CD4-positive, alpha-beta memory T cell (primary cell): ENCODE measurements at regions of chr2 and their contacts with region 1.

Region 1: GRCh38 chr2:219245148-219245898 is at the starts of genes GLB1L and STK16:
- DNase-seq: peak; percentile 85 to 88 (median 86)
- H3K4me3 ChIP-seq: peak within 1 kb of the TSS; percentile 45 to 97
- H3K4me3 Mint-ChIP-seq: peak within 1 kb of the TSS; percentile 85 to 99 (median 94)
- H3K27ac ChIP-seq: peak within 1 kb of the TSS; percentile 94
- H3K27ac Mint-ChIP-seq: peak within 1 kb of the TSS; percentile 96 to 99 (median 99)
- H3K4me1 ChIP-seq: peaks cover 59% of the 10 kb centered on the region
- H3K4me1 Mint-ChIP-seq: peaks cover 39 to 80% (median 56%) of the 10 kb centered on the region in 4 donors
- H3K27me3 ChIP-seq: no peaks in the 10 kb centered on the region
- H3K27me3 Mint-ChIP-seq: no peaks in the 10 kb centered on the region
- total RNA-seq, gene GLB1L: 1.5 to 2.5 TPM
- total RNA-seq, gene STK16: 19.3 to 21.1 TPM

Region 2: GRCh38 chr2:219171231-219171651 is 74.1 kb before region 1 on chr2:
- CTCF ChIA-PET with region 1: interaction called, 18 read pairs
- POLR2A ChIA-PET with region 1: interaction called, 119 read pairs
- intact Hi-C with region 1: no loop called
- DNase-seq: peak; percentile 39 to 58 (median 49)
- H3K4me3 ChIP-seq: no peak overlapping the region
- H3K4me3 Mint-ChIP-seq: peak overlapping the region in 1 of 8 donors; percentile 25
- H3K27ac ChIP-seq: no peak overlapping the region
- H3K27ac Mint-ChIP-seq: peak overlapping the region; percentile 35 to 91 (median 75)
- H3K4me1 ChIP-seq: peaks cover 31% of the 10 kb centered on the region
- H3K4me1 Mint-ChIP-seq: peaks cover 15 to 46% (median 31%) of the 10 kb centered on the region in 4 donors
- H3K27me3 ChIP-seq: no peaks in the 10 kb centered on the region
- H3K27me3 Mint-ChIP-seq: no peaks in the 10 kb centered on the region

Region 3: DNA sequence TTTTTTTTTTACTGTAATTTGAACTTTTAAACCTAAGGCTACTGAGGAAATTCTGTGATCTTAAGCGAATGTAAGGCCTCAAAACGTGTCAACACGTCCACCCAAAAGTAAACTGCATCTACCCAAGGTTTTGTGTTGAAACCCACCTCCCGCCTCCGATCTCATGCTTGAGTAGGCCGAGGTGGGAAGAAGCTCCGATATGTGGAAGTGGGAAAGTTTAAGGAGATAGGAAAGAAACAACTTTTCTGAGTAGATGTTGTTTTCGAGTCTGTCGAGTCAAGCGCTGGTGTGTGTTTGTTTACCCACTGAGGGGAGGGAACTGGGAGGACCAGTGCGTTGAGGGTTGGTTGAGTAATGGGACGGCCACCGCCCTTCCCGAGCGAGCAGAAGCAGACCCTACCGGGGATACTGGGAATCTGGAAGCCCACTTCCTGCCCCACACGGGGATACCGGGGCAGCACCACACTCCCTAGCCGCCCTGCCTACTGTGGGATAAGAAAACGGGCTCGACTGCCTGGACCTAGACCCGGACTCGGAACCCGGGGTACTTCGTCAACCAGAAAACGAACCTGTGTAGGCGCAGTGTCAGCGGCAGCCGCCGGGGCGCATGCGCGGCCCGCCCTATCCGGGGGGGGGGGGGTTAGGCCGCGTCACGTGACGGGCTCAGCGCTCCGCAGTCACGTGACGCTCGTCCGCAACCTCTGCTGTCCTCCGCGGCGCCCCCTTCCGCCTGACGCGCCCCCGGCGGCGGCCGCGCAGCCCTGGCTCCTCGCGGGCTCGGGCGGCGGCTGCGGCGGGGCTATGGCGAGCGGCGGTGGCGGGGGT is 67.6 kb before region 1 on chr2 and contains the start of gene RETREG2:
- CTCF ChIA-PET with region 1: interaction called, 18 read pairs
- POLR2A ChIA-PET with region 1: interaction called, 119 read pairs
- intact Hi-C with region 1: loop called (anchors 1 kb)
- DNase-seq: peak; percentile 88 to 91 (median 88)
- H3K4me3 ChIP-seq: peak within 1 kb of the TSS; percentile 81 to 96
- H3K4me3 Mint-ChIP-seq: peak within 1 kb of the TSS; percentile 91 to 98 (median 95)
- H3K27ac ChIP-seq: peak within 1 kb of the TSS; percentile 91
- H3K27ac Mint-ChIP-seq: peak within 1 kb of the TSS; percentile 96 to 99 (median 98)
- H3K4me1 ChIP-seq: peaks cover 66% of the 10 kb centered on the region
- H3K4me1 Mint-ChIP-seq: peaks cover 34 to 79% (median 62%) of the 10 kb centered on the region in 4 donors
- H3K27me3 ChIP-seq: no peaks in the 10 kb centered on the region
- H3K27me3 Mint-ChIP-seq: no peaks in the 10 kb centered on the region
- total RNA-seq, gene RETREG2: 123 to 128 TPM

Region 4: DNA sequence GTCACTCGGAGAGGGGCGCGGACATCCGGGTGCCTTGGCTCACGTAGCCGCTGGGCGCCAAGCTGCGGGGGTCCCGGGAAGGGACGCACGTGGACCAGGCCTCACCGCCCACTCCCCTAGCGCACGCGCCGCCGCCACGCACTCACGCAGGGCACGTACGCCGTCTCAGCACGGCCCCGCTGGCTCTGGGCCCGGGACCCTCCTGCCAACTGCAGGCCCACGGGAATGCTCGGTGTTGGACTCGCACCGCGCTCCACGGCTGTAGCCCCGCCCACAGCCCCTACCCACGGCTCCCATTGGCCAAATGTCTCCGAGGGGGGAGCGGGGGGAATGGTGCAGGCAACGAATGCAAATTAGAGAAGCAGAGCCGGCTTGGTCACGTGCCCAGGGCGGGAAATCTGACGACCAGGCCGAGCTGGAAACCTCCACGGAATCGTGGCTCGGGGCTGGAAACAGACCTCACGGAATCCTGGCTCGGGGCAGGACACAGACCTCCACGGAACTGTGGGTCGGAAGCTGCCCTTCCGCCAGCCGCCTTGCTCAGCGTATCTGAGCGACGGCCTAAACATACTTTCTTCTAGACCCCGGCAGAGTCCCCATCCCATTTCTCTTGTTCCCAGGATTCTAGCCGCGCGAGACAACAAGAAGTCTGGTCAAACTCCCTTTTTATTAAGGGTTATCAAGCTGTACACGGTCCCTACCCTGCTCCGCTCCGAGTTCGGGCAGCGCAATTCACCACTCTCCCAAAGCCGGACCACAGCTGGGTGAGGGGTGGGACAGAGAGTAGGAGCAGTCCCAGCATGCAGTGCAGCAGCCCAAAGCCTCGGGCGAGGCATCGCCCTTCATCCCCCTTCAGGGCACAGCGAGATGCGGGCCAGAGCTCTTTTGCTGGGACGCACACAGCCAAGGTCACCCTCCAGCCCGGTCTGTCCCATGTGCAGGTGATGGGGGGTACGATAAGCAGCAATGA is 26.3 kb before region 1 on chr2 and contains the start of gene ABCB6:
- CTCF ChIA-PET with region 1: interaction called, 11 read pairs
- POLR2A ChIA-PET with region 1: interaction called, 684 read pairs
- intact Hi-C with region 1: no loop called
- DNase-seq: peak; percentile 81 to 93 (median 83)
- H3K4me3 ChIP-seq: peak within 1 kb of the TSS; percentile 49 to 68
- H3K4me3 Mint-ChIP-seq: peak within 1 kb of the TSS; percentile 82 to 93 (median 84)
- H3K27ac ChIP-seq: peak within 1 kb of the TSS; percentile 53
- H3K27ac Mint-ChIP-seq: peak within 1 kb of the TSS; percentile 74 to 96 (median 88)
- H3K4me1 ChIP-seq: peaks cover 24% of the 10 kb centered on the region
- H3K4me1 Mint-ChIP-seq: peaks cover 8 to 25% (median 19%) of the 10 kb centered on the region in 4 donors
- H3K27me3 ChIP-seq: no peaks in the 10 kb centered on the region
- H3K27me3 Mint-ChIP-seq: no peaks in the 10 kb centered on the region
- total RNA-seq, gene ABCB6: 10.7 to 11.1 TPM

Region 5: DNA sequence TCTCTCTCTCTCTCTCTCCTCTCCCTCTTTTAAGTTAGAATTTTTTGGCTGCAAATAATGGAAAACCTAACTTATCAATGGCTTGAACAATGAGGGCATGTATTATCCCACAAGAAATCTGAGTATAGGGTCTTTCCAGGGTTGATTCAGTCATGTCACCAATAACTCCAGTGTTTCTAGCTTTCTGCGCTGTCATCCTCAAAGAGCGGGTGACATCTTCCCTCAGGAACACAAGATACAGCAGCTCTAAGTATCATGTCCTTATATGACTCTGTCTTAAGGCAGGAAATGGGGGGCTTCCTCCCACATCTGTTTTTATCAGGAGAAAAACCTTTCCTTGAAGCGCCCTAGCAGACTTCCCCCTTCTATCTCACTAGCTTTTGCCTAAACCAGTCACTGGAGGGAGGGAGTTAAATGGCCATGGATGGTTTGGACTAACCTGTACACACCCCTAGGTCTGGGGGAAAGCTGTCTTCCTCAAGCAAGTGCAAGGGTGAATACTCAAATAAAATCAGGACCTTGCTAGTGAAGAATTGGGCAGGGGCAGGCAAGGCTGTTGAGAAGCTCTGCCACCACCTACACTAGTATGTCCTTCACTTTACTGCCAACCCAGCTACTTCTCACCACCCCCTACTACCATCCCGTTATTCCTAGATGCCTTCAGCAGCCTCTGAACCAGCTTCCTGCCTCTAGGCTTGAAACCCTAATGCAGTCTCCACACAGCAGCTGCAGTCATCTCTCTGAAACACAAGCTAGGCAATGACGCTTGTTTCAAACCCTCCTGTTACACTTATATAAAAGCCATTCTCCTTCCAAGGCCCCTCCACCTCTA is 15.9 kb after region 1 on chr2:
- CTCF ChIA-PET with region 1: interaction called, 7 read pairs
- POLR2A ChIA-PET with region 1: interaction called, 16 read pairs
- intact Hi-C with region 1: no loop called
- DNase-seq: no peak
- H3K4me3 ChIP-seq: no peak overlapping the region
- H3K4me3 Mint-ChIP-seq: no peak overlapping the region
- H3K27ac ChIP-seq: no peak overlapping the region
- H3K27ac Mint-ChIP-seq: no peak overlapping the region
- H3K4me1 ChIP-seq: no peaks in the 10 kb centered on the region
- H3K4me1 Mint-ChIP-seq: peaks cover 0 to 2% (median 2%) of the 10 kb centered on the region in 4 donors
- H3K27me3 ChIP-seq: no peaks in the 10 kb centered on the region
- H3K27me3 Mint-ChIP-seq: peaks cover 1 to 6% of the 10 kb centered on the region in 2 donors